Activated CD8-positive, alpha-beta T cell treated with anti-CD3 and anti-CD28 coated beads, Interleukin-2, amount 10 ng/mL, durations not matched to agents 7 days and 5 days (primary cell): ENCODE measurements at regions of chr1 and their contacts with region 1.

Region 1: DNA sequence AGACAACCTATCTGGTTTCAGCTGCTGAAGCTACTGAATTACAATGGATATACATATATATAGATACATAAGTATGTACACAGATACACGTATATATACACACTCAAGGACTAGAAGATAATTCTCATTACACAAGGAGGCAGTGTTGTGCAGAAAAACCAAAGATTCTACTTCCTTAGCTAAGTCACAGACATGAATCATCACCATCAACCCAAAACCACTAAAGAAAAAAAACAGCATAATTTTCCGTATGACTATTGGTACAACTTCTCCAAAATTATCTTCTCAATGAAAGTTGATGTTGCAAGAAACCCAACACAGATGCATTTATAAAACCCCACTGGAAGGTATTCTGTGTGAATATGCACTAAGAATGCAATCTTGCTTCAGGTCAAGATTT is 36.8 kb upstream of the RPF1 start:
- DNase-seq: peak; percentile 32
- ATAC-seq: peak; percentile 98
- H3K4me3 Mint-ChIP-seq: peak overlapping the region; percentile 37
- H3K27ac Mint-ChIP-seq: peak overlapping the region; percentile 59
- H3K4me1 Mint-ChIP-seq: peaks cover 21% of the 10 kb centered on the region
- H3K27me3 Mint-ChIP-seq: peaks cover 16% of the 10 kb centered on the region

Region 2: GRCh38 chr1:84478876-84479868 is 36.9 kb after region 1 on chr1 and contains the start of gene RPF1:
- CTCF ChIA-PET with region 1: interaction called, 14 read pairs
- POLR2A ChIA-PET with region 1: interaction called, 3 read pairs
- DNase-seq: peak; percentile 84
- ATAC-seq: peak; percentile 98
- H3K4me3 Mint-ChIP-seq: peak within 1 kb of the TSS; percentile 99
- H3K27ac Mint-ChIP-seq: peak within 1 kb of the TSS; percentile 99
- H3K4me1 Mint-ChIP-seq: peaks cover 32% of the 10 kb centered on the region
- H3K27me3 Mint-ChIP-seq: peaks cover 20% of the 10 kb centered on the region
- total RNA-seq, gene RPF1: 41.6 to 44.1 TPM

Region 3: DNA sequence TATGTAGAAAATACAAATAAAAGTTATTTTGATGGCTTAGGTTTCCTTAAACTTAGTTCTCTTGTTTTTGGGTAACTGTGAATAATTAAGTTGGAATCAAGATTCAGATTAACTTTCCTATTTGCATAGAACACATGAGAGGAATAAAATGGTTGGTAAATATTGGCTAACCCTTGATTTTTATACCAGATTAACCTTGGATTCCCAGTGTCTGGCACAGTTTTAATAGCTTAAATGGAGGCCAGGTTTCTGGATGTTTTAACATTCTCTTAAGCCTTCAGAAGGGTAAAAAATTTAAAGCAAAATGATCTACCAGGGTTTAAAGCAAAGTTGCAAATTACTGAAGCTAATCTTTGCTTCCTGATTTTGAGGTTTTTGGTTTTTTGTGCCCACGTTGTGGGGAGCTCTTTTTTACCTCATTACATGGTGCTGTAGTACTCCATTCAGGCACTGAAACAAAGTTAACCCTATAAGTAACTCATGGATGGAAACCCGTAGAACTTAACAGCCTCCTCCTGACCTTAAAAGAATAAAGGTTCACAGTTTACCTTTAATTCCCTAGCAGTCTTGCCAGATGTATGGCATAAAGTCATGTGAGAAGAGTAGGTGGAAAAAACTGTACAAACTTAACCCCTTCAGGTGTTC is 55.5 kb after region 1 on chr1:
- CTCF ChIA-PET with region 1: no interaction called
- POLR2A ChIA-PET with region 1: no interaction called
- DNase-seq: no peak
- ATAC-seq: peak; percentile 52
- H3K4me3 Mint-ChIP-seq: no peak overlapping the region
- H3K27ac Mint-ChIP-seq: no peak overlapping the region
- H3K4me1 Mint-ChIP-seq: peaks cover 31% of the 10 kb centered on the region
- H3K27me3 Mint-ChIP-seq: no peaks in the 10 kb centered on the region

Region 4: DNA sequence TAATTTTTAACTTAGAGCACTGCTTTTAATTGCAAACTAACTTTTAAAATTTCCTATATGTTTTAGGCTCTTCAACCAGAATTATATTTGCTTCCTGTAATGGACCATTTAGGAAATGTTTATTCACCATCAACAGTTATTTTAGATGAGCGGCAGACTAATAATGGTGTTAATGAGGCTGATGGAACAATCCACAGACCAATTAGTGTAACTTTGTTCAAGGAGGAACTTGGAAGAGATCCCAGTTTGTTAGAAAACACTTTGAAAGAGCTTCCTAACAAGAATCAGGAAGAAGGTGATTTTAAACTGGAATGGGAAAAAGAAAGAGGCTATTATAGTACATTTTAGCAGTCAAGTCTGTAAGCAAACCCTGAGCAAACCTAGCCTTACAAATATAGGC is 83.5 kb after region 1 on chr1:
- CTCF ChIA-PET with region 1: no interaction called
- POLR2A ChIA-PET with region 1: no interaction called
- DNase-seq: no peak
- ATAC-seq: no peak
- H3K4me3 Mint-ChIP-seq: no peak overlapping the region
- H3K27ac Mint-ChIP-seq: no peak overlapping the region
- H3K4me1 Mint-ChIP-seq: no peaks in the 10 kb centered on the region
- H3K27me3 Mint-ChIP-seq: no peaks in the 10 kb centered on the region

Region 5: GRCh38 chr1:84573967-84574842 is 131.9 kb after region 1 on chr1 and contains the start of gene CTBS:
- CTCF ChIA-PET with region 1: interaction called, 16 read pairs
- POLR2A ChIA-PET with region 1: interaction called, 9 read pairs
- DNase-seq: peak; percentile 90
- ATAC-seq: peak; percentile 95
- H3K4me3 Mint-ChIP-seq: peak within 1 kb of the TSS; percentile 94
- H3K27ac Mint-ChIP-seq: peak within 1 kb of the TSS; percentile 99
- H3K4me1 Mint-ChIP-seq: peaks cover 33% of the 10 kb centered on the region
- H3K27me3 Mint-ChIP-seq: no peaks in the 10 kb centered on the region
- total RNA-seq, gene CTBS: 12.3 to 12.7 TPM

Region 6: GRCh38 chr1:84753516-84754385 is 311.5 kb after region 1 on chr1:
- CTCF ChIA-PET with region 1: interaction called, 36 read pairs
- POLR2A ChIA-PET with region 1: no interaction called
- DNase-seq: peak; percentile 80
- ATAC-seq: peak; percentile 92
- H3K4me3 Mint-ChIP-seq: no peak overlapping the region
- H3K27ac Mint-ChIP-seq: no peak overlapping the region
- H3K4me1 Mint-ChIP-seq: peaks cover 5% of the 10 kb centered on the region
- H3K27me3 Mint-ChIP-seq: peaks cover 24% of the 10 kb centered on the region

Region 7: DNA sequence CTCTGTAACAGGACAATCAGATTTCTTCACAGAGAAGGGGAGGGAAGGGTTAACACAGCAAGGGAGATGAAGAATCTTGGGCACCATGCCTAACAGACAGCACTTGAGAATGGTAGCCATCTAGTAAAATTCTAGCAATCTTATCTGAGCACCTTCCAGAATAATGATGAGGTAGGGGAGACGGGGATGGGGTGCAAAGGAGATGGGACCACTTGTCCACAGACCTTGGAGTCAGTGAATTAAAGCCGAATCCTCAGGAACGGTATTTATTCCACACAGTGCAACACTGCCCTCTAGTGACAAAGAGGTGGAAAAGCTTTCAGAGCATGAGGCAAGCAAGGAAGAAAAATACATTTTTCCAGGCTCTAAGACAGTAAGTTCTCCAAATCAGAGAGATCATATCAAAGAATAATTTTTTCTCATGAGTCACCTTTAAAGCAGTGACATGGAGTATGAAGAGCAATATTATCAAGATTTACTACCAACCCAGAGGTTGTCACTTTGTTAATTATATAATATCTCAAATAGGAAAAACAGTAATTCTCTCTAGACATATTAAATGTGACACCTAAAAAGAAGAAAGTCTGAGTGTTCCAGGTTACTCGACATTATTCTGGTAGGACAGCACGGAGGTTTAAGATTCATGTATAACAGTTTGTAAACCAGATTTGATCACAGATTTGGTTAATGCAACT is 494.0 kb after region 1 on chr1:
- CTCF ChIA-PET with region 1: interaction called, 11 read pairs
- POLR2A ChIA-PET with region 1: no interaction called
- DNase-seq: peak; percentile 49
- ATAC-seq: peak; percentile 55
- H3K4me3 Mint-ChIP-seq: no peak overlapping the region
- H3K27ac Mint-ChIP-seq: no peak overlapping the region
- H3K4me1 Mint-ChIP-seq: no peaks in the 10 kb centered on the region
- H3K27me3 Mint-ChIP-seq: no peaks in the 10 kb centered on the region